ENCODE measurements at regions of chr10 and their contacts with region 1.

Region 1: DNA sequence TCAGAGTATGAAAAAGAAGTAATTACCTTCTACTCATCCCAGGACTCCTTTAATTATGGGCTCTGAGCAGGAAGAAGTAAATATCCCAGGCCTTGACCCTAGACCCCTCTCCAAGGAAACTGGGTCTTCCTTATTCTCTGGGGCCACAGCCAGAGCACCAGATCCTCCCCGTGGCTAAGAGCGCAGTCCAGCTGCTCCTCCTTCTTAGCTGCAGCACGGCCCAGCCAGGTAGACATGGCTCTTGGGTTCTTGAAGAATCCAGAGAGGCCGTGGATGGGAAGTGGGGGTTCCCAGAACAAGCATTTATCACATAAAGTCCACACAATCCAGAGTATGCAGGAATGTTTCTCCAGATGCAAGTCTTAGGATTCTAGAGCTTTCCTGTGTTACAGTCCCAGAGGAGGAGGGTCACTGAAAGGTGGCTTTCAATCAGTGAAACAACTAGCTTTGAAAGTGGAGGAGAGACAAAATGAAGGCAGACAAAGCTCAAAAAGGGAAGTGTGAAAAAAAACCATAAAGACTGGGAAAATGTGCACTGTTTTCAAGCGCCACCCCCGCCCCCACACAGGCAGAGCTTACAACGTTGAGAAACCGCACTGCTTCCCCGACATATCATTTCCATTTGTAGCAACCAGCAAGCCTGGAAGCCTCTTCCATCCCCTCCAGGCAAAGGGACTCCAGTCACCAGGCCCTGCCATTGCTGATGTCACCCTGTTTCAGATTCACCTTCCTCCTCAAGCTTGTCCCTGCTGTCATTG is 396.5 kb upstream of the MKI67 start:
- DNase-seq: no peak
- ATAC-seq: no peak

Region 2: DNA sequence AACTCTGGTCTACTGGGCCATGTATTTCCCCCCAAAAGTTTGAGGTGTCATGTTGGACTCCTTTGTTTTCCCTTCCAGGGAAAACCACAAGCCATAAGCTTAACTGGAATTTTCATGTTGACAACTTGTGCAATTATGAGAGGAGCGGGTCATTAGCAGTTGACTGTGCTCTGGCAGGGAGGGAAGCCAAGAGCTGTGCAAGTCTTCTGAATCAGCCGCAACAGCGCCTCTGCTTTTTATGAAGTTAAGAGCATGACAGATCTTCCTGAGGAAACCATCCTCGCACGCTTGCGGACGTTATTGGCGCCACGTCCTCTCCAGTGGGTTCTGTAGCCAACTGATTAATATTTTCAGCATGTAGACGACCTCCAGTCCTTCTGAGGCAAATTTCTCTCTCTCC is 247.8 kb before region 1 on chr10:
- intact Hi-C with region 1: loop called in 1 of 2 experiments (anchors 5 kb)
- DNase-seq: peak; percentile 44
- ATAC-seq: peak; percentile 34 to 73